A673 (cell line): ENCODE measurements at regions of chr1 and their contacts with region 1.

Region 1: DNA sequence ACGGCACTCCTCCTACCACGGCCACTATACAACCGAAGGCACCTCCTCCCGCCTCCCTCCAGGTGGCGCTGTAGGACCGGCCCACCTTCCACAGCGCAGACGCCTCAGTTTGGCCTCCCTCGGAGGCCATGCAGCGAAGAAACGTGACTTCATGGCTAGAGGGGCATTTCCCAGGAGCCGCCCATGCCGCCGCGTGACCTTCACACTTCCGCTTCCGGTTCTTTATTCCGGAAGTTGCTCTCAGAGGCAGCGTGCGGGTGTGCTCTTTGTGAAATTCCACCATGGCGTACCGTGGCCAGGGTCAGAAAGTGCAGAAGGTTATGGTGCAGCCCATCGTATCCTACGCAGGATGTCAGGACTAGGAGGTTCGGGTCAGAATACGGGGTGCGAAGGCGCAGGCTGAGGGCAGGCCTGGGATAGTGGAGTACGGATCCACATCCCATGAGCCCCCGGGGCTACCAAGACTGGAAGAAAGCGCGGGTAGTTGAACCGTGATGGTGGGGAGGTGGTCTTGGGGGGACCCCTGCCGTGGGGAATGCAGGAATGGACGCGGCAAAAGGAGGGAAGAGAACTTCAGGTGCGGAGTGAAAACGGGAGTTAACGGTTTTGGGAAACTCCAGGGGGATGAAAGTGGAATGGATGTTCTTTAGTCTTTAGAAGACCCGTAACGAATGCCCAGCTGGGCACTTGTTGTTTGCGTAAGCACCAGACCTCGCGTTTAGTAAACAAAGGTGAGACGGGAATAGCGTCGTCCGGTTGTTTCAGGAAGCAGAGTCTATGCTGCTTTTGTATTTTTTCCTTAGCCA is at the start of gene SNRPE:
- DNase-seq: peak; percentile 99
- H3K4me3 ChIP-seq: peak within 1 kb of the TSS; percentile 80
- H3K27ac ChIP-seq: peak within 1 kb of the TSS; percentile 88
- H3K4me1 ChIP-seq: peaks cover 15% of the 10 kb centered on the region
- H3K27me3 ChIP-seq: no peaks in the 10 kb centered on the region
- CTCF ChIP-seq: peak; percentile 89
- total RNA-seq, gene SNRPE: 315 and 358 TPM in 2 replicates

Region 2: DNA sequence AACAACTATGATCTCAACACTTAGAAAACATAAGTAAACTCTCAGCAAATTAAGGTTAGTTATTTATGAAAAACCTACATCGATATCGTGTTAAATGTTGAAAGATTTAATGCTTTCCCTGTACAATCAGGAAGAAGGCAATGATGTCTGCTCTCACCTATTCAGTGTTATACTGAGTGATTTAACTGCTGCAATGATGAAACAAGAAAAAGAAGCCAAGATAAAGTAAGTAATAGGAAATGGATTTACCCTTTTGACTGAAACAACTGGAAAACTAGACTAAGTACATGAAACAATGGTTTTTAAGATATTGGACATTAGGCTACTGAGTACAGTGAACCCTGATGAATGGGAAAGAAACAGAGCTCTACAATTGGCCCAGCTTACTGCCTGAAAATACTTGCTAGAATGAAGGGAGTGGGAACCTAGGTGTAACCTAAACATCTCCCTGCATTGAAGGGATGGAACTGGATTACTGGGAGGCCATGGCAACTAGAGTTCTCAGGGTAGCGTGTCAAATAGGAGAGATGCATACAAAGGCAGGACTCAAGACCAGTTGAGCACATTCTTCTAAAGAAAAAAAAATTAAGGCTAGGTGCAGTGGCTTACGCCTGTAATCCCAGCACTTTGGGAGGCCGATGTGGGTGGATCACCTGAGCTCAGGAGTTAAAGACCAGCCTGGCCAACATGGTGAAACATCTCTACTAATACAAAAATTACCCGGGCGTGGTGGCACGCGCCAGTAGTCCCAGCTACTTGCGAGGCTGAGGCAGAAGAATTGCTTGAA is 37.1 kb after region 1 on chr1:
- CTCF ChIA-PET with region 1: interaction called, 15 read pairs
- POLR2A ChIA-PET with region 1: no interaction called
- intact Hi-C with region 1: no loop called
- DNase-seq: no peak
- H3K4me3 ChIP-seq: no peak overlapping the region
- H3K27ac ChIP-seq: no peak overlapping the region
- H3K4me1 ChIP-seq: no peaks in the 10 kb centered on the region
- H3K27me3 ChIP-seq: no peaks in the 10 kb centered on the region
- CTCF ChIP-seq: no peak

Region 3: GRCh38 chr1:204128964-204129896 is 267.6 kb after region 1 on chr1:
- CTCF ChIA-PET with region 1: interaction called, 15 read pairs
- POLR2A ChIA-PET with region 1: interaction called, 3 read pairs
- intact Hi-C with region 1: loop called (anchors 1 kb)
- DNase-seq: peak; percentile 82
- H3K4me3 ChIP-seq: no peak overlapping the region
- H3K27ac ChIP-seq: no peak overlapping the region
- H3K4me1 ChIP-seq: peaks cover 36% of the 10 kb centered on the region
- H3K27me3 ChIP-seq: no peaks in the 10 kb centered on the region
- CTCF ChIP-seq: peak; percentile 92

Region 4: GRCh38 chr1:204207136-204207616 is 345.6 kb after region 1 on chr1:
- CTCF ChIA-PET with region 1: no interaction called
- POLR2A ChIA-PET with region 1: no interaction called
- intact Hi-C with region 1: loop called (anchors 1 kb)
- DNase-seq: peak; percentile 52
- H3K4me3 ChIP-seq: no peak overlapping the region
- H3K27ac ChIP-seq: no peak overlapping the region
- H3K4me1 ChIP-seq: no peaks in the 10 kb centered on the region
- H3K27me3 ChIP-seq: peaks cover 16% of the 10 kb centered on the region
- CTCF ChIP-seq: peak; percentile 94

Region 5: DNA sequence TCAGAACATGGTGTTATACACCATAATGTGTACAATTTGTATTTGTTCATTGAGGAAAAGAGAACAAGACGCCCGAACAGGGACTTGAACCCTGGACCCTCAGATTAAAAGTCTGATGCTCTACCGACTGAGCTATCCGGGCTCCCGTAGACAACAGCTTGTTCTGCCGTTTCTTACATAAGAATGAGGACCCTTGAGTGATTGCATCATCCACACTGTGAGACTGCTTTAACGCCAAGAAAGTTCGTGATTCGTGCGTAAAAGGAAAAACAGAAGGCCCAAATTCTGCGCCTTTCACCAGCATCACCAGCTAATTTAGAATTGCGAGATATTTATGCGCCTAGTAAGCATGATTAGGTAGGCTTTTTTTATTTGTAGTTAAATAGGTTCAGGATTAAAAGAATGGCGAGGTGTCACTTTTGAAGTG is 645.4 kb after region 1 on chr1:
- CTCF ChIA-PET with region 1: no interaction called
- POLR2A ChIA-PET with region 1: no interaction called
- intact Hi-C with region 1: loop called (anchors 5 kb)
- DNase-seq: peak; percentile 95
- H3K4me3 ChIP-seq: peak overlapping the region; percentile 59
- H3K27ac ChIP-seq: peak overlapping the region; percentile 97
- H3K4me1 ChIP-seq: peaks cover 24% of the 10 kb centered on the region
- H3K27me3 ChIP-seq: peaks cover 4% of the 10 kb centered on the region
- CTCF ChIP-seq: no peak

Region 6: DNA sequence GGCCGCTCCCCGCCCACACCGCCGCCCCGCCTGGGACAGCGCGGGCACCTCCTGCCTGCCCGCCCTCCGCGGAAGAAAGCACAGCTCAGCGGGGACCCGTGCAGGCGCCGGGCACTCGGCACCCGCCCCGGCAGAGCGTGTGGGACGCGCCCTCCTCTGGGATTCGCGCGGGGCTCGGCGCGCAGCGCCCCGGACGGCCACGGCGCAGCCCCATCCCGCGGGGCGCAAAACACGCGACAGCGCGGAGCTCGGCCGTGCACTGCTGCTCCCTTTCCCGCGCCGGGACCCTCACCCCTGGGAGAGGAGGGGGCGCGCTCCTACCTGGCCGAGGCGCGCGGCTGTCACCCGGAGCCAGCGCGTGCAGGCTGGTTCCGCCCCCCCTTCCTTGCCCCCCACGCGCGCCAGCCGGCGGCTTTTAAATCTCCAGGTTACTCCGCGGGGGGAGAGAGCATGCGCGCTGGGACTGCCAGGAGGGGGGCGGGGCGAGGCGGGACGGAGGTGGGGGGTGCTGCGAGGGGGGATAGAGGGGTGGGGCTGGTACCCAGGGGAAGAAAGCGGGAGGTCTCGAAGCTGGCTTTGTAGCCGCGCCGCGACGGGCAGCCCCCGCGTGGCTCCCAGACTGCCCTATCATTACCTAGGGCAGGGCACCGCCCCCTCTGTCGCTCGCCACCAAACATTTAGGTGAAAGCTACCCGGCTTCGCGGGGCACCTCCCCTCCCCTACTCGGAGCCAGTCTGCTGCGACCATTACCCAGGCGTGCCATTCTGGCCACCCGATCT is 1818.7 kb after region 1 on chr1 and contains the start of gene SLC45A3:
- CTCF ChIA-PET with region 1: no interaction called
- POLR2A ChIA-PET with region 1: no interaction called
- intact Hi-C with region 1: no loop called
- DNase-seq: peak; percentile 66
- H3K4me3 ChIP-seq: peak within 1 kb of the TSS; percentile 61
- H3K27ac ChIP-seq: no peak within 1 kb of the TSS
- H3K4me1 ChIP-seq: peaks cover 15% of the 10 kb centered on the region
- H3K27me3 ChIP-seq: no peaks in the 10 kb centered on the region
- CTCF ChIP-seq: no peak
- total RNA-seq, gene SLC45A3: 8.5 and 11.0 TPM in 2 replicates